Natural killer cell (primary cell): ENCODE measurements at regions of chr4 and their contacts with region 1.

Region 1: DNA sequence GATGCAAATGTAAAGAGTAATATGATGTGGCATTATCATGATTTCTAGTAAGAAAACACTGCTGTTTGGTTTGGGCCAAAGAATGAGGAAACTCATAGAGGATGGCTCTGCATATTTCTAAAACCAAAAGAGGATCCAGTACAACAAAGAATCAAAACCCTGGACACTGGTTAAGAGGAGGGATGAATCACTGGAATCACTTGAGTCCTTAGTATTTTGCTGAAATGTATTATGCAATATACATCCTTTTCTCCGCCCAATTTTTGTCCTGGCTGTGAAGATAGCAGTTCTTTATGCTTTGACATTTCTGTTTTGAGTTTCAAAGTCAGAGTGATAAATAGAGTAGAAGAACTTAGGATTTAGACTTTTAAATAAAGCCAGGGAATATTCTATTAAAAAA is 345.9 kb downstream of the PACRGL start:
- DNase-seq: no peak
- ATAC-seq: no peak
- H3K4me3 ChIP-seq: no peak overlapping the region
- H3K4me3 Mint-ChIP-seq: no peak overlapping the region
- H3K27ac ChIP-seq: no peak overlapping the region
- H3K27ac Mint-ChIP-seq: no peak overlapping the region
- H3K4me1 ChIP-seq: peaks cover 7% of the 10 kb centered on the region
- H3K4me1 Mint-ChIP-seq: peaks cover 10 to 17% of the 10 kb centered on the region in 2 donors
- H3K27me3 ChIP-seq: peaks cover 3% of the 10 kb centered on the region
- H3K27me3 Mint-ChIP-seq: peaks cover 11 to 43% of the 10 kb centered on the region in 2 donors
- CTCF ChIP-seq: no peak

Region 2: GRCh38 chr4:20890761-20891160 is 155.4 kb before region 1 on chr4:
- intact Hi-C with region 1: loop called (anchors 10 kb)
- DNase-seq: no peak
- ATAC-seq: no peak
- H3K4me3 ChIP-seq: no peak overlapping the region
- H3K4me3 Mint-ChIP-seq: no peak overlapping the region
- H3K27ac ChIP-seq: no peak overlapping the region
- H3K27ac Mint-ChIP-seq: no peak overlapping the region
- H3K4me1 ChIP-seq: no peaks in the 10 kb centered on the region
- H3K4me1 Mint-ChIP-seq: peaks cover 14 to 19% of the 10 kb centered on the region in 2 donors
- H3K27me3 ChIP-seq: no peaks in the 10 kb centered on the region
- H3K27me3 Mint-ChIP-seq: no peaks in the 10 kb centered on the region
- CTCF ChIP-seq: no peak

Region 3: DNA sequence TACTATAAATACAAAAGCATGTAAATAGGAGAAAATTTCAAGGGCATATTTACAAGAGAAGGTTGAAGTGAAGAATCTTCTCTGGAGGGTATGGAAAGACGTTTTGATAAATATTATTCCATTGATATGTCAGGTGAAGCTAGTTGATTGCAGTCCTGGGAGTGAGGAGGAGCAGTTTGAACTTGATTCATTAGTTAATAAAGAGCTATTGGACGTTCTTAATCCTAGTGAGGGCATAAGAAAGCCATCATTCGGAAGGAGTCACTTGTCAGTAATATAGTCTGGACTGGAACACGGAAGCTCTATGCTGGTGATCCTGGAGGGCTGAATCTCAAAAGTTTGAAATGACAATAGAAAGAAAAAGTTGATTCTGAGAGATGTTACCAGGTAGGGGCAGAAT is 109.2 kb after region 1 on chr4:
- intact Hi-C with region 1: no loop called
- DNase-seq: no peak
- ATAC-seq: no peak
- H3K4me3 ChIP-seq: no peak overlapping the region
- H3K4me3 Mint-ChIP-seq: no peak overlapping the region
- H3K27ac ChIP-seq: no peak overlapping the region
- H3K27ac Mint-ChIP-seq: no peak overlapping the region
- H3K4me1 ChIP-seq: no peaks in the 10 kb centered on the region
- H3K4me1 Mint-ChIP-seq: no peaks in the 10 kb centered on the region
- H3K27me3 ChIP-seq: no peaks in the 10 kb centered on the region
- H3K27me3 Mint-ChIP-seq: peaks cover 2 to 22% of the 10 kb centered on the region in 2 donors
- CTCF ChIP-seq: no peak